ENCODE measurements at regions of chr12 and their contacts with region 1.

Region 1: DNA sequence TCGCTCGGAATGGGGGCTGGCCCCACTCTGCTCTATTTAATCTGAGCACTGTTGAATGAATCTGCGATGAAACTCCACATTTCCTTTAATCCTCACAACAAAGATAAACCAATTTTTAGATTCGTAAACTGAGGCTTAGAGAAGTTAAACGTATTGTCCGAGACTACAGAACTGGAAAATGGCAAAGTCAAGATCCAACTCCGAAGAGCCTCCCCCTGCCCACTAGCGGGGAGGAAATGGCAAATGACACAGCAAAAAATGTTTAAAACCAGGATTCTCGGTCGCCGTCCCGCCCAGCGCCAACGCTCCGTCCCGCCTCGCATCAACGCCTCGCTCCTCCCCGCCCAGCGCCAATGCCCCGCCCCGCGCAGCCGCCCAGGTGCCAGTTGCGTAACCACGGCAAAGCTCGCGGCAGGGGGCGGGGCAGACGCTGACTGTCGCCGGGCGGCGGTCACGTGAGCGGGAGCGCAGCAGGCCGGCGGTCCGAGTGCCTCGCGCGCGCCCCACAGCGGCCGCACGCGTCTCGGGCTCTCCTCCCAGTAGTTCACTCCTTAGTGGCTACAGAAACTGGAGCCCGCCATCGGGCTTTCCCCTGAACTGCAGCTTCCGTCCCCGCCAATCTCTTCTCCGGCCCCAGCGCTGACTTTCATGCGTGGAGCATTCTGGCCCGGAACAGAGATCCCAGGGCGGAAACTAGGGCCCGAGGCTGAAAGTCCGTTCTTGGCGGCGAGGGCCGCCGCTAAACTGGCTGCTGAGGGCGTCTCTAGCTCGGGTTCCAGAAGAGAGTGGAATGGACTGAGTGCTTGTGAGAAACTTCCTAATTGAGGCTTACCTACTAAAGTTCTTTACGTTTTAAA is 13.6 kb upstream of the LRRC23 start:
- DNase-seq: peak; percentile 98 to 99
- ATAC-seq: peak; percentile 97 to 99 (median 98)
- H3K4me3 ChIP-seq: peak overlapping the region; percentile 15 to 63 (median 53)
- H3K27ac ChIP-seq: peak overlapping the region; percentile 73 to 94 (median 90)
- H3K4me1 ChIP-seq: peaks cover 0 to 22% (median 11%) of the 10 kb centered on the region in 9 donors
- H3K27me3 ChIP-seq: no peaks in the 10 kb centered on the region
- CTCF ChIP-seq: peak; percentile 81 to 99 (median 95)

Region 2: GRCh38 chr12:6851921-6852650 is 38.9 kb before region 1 on chr12 and contains the start of gene USP5:
- intact Hi-C with region 1: loop called in 1 of 10 experiments (anchors 1 kb)
- DNase-seq: peak; percentile 99
- ATAC-seq: peak; percentile 91 to 96 (median 92)
- H3K4me3 ChIP-seq: peak within 1 kb of the TSS; percentile 50 to 93 (median 68)
- H3K27ac ChIP-seq: peak within 1 kb of the TSS; percentile 18 to 99 (median 94)
- H3K4me1 ChIP-seq: peaks cover 3 to 26% (median 16%) of the 10 kb centered on the region in 9 donors
- H3K27me3 ChIP-seq: no peaks in the 10 kb centered on the region
- CTCF ChIP-seq: peak in 4 of 9 donors; percentile 8 to 36 (median 10)
- total RNA-seq, gene USP5: 64.8 to 95.5 (median 74.1) TPM

Region 3: GRCh38 chr12:6937481-6938297 is 46.7 kb after region 1 on chr12:
- intact Hi-C with region 1: no loop called
- DNase-seq: peak; percentile 93
- ATAC-seq: peak; percentile 86 to 93 (median 88)
- H3K4me3 ChIP-seq: peak overlapping the region; percentile 58 to 96 (median 72)
- H3K27ac ChIP-seq: peak overlapping the region; percentile 91 to 98 (median 94)
- H3K4me1 ChIP-seq: peaks cover 19 to 85% (median 66%) of the 10 kb centered on the region in 9 donors
- H3K27me3 ChIP-seq: no peaks in the 10 kb centered on the region
- CTCF ChIP-seq: peak; percentile 91 to 99 (median 97)